MCF 10A (cell line): ENCODE measurements at regions of chr19 and their contacts with region 1.

Region 1: GRCh38 chr19:52823676-52824075 is 2.2 kb upstream of the ZNF28 start:
- DNase-seq: no peak
- H3K4me3 Mint-ChIP-seq: no peak overlapping the region
- H3K27ac Mint-ChIP-seq: no peak overlapping the region
- H3K4me1 Mint-ChIP-seq: peaks cover 9% of the 10 kb centered on the region
- H3K27me3 Mint-ChIP-seq: no peaks in the 10 kb centered on the region
- CTCF ChIP-seq: no peak

Region 2: DNA sequence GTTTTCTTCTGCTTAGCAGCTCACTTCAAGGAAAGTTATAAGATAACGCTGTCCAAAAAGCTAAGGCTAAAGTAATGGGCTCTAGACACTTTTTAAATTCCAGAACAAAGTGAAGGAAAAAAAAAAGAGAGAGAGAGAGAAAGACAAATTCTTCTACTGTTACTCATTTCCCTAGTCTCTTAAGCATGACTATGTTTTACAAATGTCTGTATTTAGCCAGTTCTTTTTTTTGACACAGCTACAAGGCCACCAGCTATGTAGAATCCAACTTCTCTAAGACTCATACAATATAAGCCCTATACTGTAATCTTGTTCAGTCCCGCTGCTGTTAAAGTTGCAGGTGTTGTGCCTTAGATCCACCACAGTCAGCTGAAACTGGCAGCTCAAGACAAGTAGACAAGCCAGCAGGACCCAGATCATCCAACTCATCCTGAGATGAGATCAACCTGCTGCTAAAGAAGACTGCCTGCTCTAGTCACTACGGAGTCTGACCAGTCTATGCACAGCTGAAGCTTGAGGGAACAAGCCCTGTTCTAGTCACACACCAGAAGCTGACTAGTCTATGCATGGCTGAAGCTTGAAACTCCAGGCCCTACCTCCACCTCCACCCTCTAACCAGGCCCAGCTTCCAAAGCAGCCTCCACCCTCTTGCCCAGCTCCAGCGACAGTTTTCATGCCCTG is 175.2 kb before region 1 on chr19:
- CTCF ChIA-PET with region 1: no interaction called
- POLR2A ChIA-PET with region 1: no interaction called
- intact Hi-C with region 1: no loop called
- DNase-seq: no peak
- H3K4me3 Mint-ChIP-seq: no peak overlapping the region
- H3K27ac Mint-ChIP-seq: no peak overlapping the region
- H3K4me1 Mint-ChIP-seq: no peaks in the 10 kb centered on the region
- H3K27me3 Mint-ChIP-seq: no peaks in the 10 kb centered on the region
- CTCF ChIP-seq: no peak

Region 3: DNA sequence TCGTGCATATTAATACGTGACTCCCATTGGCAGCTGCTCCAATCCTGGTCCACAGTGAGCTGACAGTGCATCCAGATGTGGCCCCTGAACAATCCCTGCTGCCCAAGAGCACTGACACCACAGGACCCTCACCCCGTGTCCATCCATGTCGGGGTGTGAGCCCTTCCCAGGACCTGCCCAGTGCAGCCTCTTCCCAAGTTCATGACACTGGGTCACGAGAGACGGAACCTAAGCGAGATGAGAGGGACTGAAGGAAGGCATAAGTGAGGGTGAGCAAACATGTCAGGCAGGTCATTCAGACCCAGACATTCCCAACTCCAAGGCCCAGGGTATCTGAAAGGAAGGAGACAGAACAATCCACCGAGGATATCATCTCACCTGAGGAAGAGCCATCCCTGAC is 30.2 kb after region 1 on chr19:
- CTCF ChIA-PET with region 1: no interaction called
- POLR2A ChIA-PET with region 1: interaction called, 3 read pairs
- intact Hi-C with region 1: loop called (anchors 5 kb)
- DNase-seq: no peak
- H3K4me3 Mint-ChIP-seq: no peak overlapping the region
- H3K27ac Mint-ChIP-seq: no peak overlapping the region
- H3K4me1 Mint-ChIP-seq: peaks cover 7% of the 10 kb centered on the region
- H3K27me3 Mint-ChIP-seq: no peaks in the 10 kb centered on the region
- CTCF ChIP-seq: no peak

Region 4: DNA sequence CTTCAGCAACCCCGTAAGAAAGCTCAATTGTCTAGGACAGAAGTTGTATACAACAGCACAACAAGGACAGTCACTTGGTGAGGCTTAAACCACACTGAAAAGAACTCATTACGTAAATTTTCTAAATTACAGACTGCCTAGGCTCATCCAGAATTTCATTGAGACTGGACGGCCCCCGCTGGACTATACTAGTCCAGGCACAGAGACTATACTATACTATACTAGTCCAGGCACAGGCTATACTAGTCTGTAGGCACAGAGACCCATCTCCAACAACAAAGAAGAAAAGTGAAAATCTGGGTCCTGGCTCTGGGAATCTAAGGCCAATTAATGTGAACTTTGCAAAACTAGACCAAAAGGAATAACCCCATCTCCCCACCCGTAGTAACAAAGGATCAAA is 138.3 kb after region 1 on chr19:
- CTCF ChIA-PET with region 1: no interaction called
- POLR2A ChIA-PET with region 1: no interaction called
- intact Hi-C with region 1: no loop called
- DNase-seq: no peak
- H3K4me3 Mint-ChIP-seq: peak overlapping the region; percentile 95
- H3K27ac Mint-ChIP-seq: peak overlapping the region; percentile 87
- H3K4me1 Mint-ChIP-seq: no peaks in the 10 kb centered on the region
- H3K27me3 Mint-ChIP-seq: no peaks in the 10 kb centered on the region
- CTCF ChIP-seq: no peak